ENCODE measurements at regions of chr3 and their contacts with region 1.

Region 1: GRCh38 chr3:194315088-194315964 is 35.8 kb downstream of the CPN2 start:
- DNase-seq: peak; percentile 79
- H3K4me3 Mint-ChIP-seq: peak overlapping the region; percentile 83
- H3K27ac Mint-ChIP-seq: no peak overlapping the region
- H3K4me1 Mint-ChIP-seq: peaks cover 43% of the 10 kb centered on the region
- H3K27me3 Mint-ChIP-seq: peaks cover 7% of the 10 kb centered on the region

Region 2: GRCh38 chr3:193780810-193781472 is 534.4 kb before region 1 on chr3:
- intact Hi-C with region 1: loop called (anchors 1 kb)
- DNase-seq: no peak
- H3K4me3 Mint-ChIP-seq: no peak overlapping the region
- H3K27ac Mint-ChIP-seq: no peak overlapping the region
- H3K4me1 Mint-ChIP-seq: peaks cover 35% of the 10 kb centered on the region
- H3K27me3 Mint-ChIP-seq: peaks cover 49% of the 10 kb centered on the region